ENCODE measurements at regions of chr6 and their contacts with region 1.

Region 1: GRCh38 chr6:90179190-90180169 is 117.2 kb downstream of the BACH2 start:
- DNase-seq: peak; percentile 46
- ATAC-seq: no peak
- H3K4me3 Mint-ChIP-seq: no peak overlapping the region
- H3K27ac Mint-ChIP-seq: no peak overlapping the region
- H3K4me1 Mint-ChIP-seq: peaks cover 79% of the 10 kb centered on the region
- H3K27me3 Mint-ChIP-seq: no peaks in the 10 kb centered on the region

Region 2: DNA sequence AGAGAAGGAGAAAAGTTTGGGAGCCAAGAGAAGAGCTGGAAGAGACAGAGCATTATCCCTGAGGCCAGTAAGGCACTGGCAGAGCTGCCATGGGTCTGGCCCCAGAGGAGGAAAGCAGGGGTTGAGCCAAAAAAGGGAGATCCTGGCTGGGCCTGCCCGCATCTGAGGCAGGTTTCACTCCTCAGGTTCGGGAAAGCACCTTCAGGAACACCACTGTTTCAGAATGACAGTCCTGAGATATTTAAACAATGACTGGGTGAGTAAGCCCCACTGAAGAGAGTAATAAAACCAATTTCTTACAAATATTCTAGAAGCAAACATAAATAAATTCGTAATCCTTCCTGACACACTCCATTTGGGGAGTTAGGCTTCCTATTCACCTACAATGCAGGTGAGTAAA is 35.1 kb before region 1 on chr6:
- CTCF ChIA-PET with region 1: interaction called, 11 read pairs
- POLR2A ChIA-PET with region 1: no interaction called
- intact Hi-C with region 1: loop called in 1 of 2 experiments (anchors 1 kb)
- DNase-seq: peak; percentile 75
- ATAC-seq: peak; percentile 75
- H3K4me3 Mint-ChIP-seq: peak overlapping the region; percentile 32
- H3K27ac Mint-ChIP-seq: peak overlapping the region; percentile 95
- H3K4me1 Mint-ChIP-seq: peaks cover 81% of the 10 kb centered on the region
- H3K27me3 Mint-ChIP-seq: no peaks in the 10 kb centered on the region

Measured in activated CD4-positive, alpha-beta T cell treated with anti-CD3 and anti-CD28 coated beads for 36 hours (primary cell).